PC-9 (cell line): ENCODE measurements at regions of chr12 and their contacts with region 1.

Region 1: DNA sequence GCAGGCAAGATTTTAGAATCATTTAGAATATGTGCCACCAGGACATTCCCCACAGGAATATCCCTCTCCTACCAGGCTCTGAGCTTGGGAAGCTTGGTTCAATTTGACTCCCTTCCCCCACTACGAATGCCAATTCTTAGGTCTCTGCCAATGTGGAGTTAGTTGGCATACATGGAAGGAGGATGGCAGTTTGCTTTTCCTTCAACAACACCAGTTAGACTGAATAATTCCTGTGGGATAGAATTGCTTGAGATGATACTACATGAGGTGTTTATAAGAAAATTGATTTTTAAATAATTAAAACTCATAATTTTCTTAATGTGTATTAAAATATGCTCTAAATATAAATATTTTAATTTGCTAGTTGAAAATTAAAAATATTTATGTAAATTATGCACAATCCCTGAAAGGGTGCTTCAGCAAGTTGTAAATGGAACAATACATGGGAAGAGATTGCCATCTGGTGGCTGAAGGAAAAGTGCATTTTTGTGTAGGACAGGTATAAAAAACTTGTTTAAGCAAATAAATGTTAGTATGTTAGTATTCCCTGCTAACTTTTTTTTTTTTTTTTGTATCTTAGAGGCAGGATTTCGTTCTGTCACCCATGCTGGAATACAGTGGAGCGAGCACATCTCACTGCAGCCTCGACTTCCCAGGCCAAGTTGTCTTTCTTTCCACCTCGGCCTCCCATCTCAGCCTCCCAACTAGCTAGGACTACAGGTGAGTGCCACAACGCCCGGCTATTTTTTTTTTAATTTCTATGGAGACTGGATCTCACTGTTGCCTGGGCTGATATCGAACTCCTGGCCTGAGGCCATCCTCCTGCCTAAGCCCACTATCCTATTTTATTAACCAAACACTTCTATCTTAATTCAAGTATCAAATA is 25.8 kb upstream of the STRAP start:
- DNase-seq: peak; percentile 63 to 65
- H3K4me3 ChIP-seq: peak overlapping the region; percentile 18; the same call in 1 of the 2 replicates
- H3K27ac ChIP-seq: peak overlapping the region; percentile 84
- H3K4me1 ChIP-seq: peaks cover 26% of the 10 kb centered on the region
- H3K27me3 ChIP-seq: no peaks in the 10 kb centered on the region
- CTCF ChIP-seq: peak; percentile 89

Region 2: DNA sequence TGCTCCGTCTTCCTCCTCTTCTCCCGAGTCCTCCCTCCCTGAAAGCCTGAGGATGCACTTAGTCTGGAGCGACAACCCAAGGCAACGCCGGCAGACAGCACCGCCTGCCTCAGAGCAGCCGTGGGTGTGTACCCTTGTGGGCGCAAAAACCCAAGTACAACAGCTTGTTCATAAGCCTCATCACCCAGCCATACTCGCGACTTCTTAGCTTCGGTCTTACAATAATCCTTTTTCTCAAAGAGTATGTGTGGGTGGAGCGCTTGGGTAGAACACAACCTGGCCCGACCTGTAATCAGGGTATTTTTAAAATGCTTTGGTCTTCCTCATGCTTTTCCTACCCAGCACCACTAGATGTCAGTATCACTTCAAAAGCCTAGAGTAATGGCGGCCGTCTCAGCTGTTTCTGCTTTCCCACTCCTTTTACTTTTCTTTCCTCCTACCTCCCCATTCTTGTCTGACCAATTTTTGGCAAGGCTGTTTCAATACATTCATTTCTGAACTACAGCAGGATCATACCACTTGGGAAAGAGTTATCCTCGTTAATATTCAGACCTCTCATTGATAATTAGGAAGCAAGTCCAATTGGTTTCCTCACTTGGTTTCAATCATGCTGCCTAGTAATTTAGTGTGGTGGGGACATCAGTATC is 266.0 kb before region 1 on chr12:
- CTCF ChIA-PET with region 1: interaction called, 5 read pairs
- POLR2A ChIA-PET with region 1: no interaction called
- intact Hi-C with region 1: loop called (anchors 1 kb)
- DNase-seq: peak; percentile 55 to 64
- H3K4me3 ChIP-seq: peak overlapping the region; percentile 35; the same call in 1 of the 2 replicates
- H3K27ac ChIP-seq: no peak overlapping the region
- H3K4me1 ChIP-seq: peaks cover 8% of the 10 kb centered on the region; the same call in 1 of the 2 replicates
- H3K27me3 ChIP-seq: no peaks in the 10 kb centered on the region
- CTCF ChIP-seq: peak; percentile 92

Region 3: DNA sequence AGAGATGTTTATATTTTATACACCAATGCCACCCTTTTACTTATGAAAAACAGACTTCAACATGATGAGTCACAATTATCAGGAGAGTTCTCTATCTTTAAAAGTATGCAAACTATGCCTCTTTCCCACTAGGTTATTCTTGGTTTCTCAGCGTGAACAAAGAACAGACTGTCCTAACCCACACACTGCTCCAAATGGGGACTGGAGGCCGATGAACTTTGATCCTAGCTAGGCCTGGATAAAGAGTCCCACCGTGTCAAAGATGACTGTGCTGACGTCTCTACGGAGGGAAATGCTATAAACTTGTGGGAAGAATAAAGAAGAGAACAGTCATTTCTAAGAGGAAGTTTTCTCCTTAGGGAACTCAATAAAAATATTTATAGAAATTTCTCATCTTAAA is 227.2 kb before region 1 on chr12:
- CTCF ChIA-PET with region 1: no interaction called
- POLR2A ChIA-PET with region 1: interaction called, 4 read pairs
- intact Hi-C with region 1: loop called (anchors 2 kb)
- DNase-seq: peak; percentile 79 to 95
- H3K4me3 ChIP-seq: no peak overlapping the region
- H3K27ac ChIP-seq: peak overlapping the region; percentile 96
- H3K4me1 ChIP-seq: peaks cover 31% of the 10 kb centered on the region
- H3K27me3 ChIP-seq: no peaks in the 10 kb centered on the region
- CTCF ChIP-seq: no peak

Region 4: GRCh38 chr12:15700595-15700994 is 155.7 kb before region 1 on chr12:
- CTCF ChIA-PET with region 1: no interaction called
- POLR2A ChIA-PET with region 1: no interaction called
- intact Hi-C with region 1: loop called (anchors 5 kb)
- DNase-seq: peak in 1 of 2 experiments; percentile 74
- H3K4me3 ChIP-seq: no peak overlapping the region
- H3K27ac ChIP-seq: peak overlapping the region; percentile 58
- H3K4me1 ChIP-seq: peaks cover 27% of the 10 kb centered on the region
- H3K27me3 ChIP-seq: no peaks in the 10 kb centered on the region
- CTCF ChIP-seq: no peak

Region 5: GRCh38 chr12:15801770-15802744 is 54.3 kb before region 1 on chr12:
- CTCF ChIA-PET with region 1: interaction called, 4 read pairs
- POLR2A ChIA-PET with region 1: no interaction called
- intact Hi-C with region 1: loop called (anchors 1 kb)
- DNase-seq: peak; percentile 77 to 93
- H3K4me3 ChIP-seq: no peak overlapping the region
- H3K27ac ChIP-seq: peak overlapping the region; percentile 44
- H3K4me1 ChIP-seq: peaks cover 61% of the 10 kb centered on the region
- H3K27me3 ChIP-seq: no peaks in the 10 kb centered on the region
- CTCF ChIP-seq: no peak